K562 (cell line): ENCODE measurements at regions of chr1 and their contacts with region 1.

Region 1: DNA sequence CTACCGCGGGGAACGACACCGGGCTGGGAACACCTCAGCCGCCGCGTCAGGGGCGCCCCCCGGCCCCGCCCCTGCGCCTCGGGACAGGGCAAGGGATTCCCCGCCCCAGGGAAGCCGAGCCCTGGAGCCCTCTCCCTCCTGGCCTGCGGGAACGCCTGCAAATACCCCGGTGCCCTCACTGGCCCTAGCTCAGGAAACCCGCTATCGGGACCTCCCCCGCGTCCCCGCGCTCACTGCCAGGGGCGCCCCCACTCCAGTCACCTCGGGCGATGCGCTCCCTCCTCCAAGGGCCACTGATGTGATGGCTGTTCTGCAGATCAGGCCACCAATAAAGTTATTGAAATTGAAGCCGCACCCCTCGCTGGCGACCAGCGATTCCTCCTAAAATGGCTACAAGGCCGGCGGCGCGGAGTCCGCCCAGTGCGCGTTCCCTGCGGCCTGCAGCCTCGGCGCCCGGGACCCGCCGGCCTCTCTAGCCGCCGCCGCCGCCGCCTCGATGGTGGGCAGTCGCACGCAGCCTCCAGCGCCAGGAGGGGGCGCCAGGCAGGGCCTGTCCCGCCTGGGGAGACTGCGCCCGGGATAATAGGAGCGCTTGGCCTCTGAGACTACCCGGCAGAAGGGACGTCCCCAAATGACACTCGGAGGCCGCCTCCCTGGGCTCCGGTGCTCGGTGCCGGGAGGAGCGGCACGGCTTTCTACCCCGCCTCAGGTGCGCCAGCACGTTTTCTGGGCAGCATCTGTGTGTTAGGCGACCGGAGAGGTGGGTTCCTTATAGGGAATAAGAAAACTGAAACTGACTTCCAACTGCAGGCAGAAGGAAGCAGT is at the start of gene PRKAB2:
- DNase-seq: peak; percentile 89 to 95 (median 91)
- ATAC-seq: peak; percentile 94
- H3K4me3 ChIP-seq: peak within 1 kb of the TSS; percentile 70
- H3K27ac ChIP-seq: peak within 1 kb of the TSS; percentile 76
- H3K4me1 ChIP-seq: peaks cover 14% of the 10 kb centered on the region in 2 experiments
- H3K27me3 ChIP-seq: no peaks in the 10 kb centered on the region
- CTCF ChIP-seq: peak; percentile 81 to 91 (median 83)
- EP300 ChIP-seq: no peak; the same call in 1 of the 2 replicates
- POLR2A ChIP-seq: peak; percentile 78
- RAD21 ChIP-seq: peak; percentile 85 to 94
- polyA plus RNA-seq, gene PRKAB2: 2.3 to 4.0 TPM

Region 2: DNA sequence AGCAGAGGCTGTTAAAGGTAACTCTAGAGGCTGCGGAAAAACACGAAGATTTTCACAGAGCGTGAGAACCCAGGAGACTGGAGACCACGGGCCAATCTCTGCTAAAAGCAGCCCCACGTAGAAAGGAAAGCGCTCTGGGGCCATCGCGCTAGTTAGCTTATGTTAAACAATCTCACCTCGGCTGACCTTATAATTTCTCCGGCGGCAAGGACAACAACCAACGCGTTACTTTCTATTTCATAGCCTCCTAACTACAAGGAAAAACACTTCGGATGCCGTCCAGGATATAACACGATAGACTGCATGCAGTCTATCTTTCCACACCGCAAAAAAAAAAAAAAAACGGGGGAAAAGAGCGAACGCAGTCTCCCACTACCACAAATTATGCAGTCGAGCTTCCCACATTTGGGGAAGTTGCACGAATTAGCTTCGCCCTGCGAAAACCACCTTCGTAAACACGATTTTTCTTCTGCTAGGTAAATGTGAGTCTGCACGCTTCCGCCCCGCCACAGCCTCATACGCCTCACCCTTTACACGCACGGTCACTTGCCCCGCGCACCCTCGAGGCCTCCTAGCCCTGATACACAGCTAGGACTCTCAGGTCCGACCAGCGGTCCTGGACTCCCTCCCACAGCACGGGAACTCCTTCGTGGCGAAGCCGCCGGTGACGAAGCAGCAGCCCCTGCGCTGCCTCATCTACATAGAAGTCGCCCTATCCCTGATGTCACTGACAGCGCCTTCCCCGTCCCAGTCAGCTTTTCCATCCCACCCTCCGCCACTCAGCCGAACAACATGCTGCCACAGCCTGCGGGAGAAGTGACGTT is 87.9 kb before region 1 on chr1:
- CTCF ChIA-PET with region 1: no interaction called
- POLR2A ChIA-PET with region 1: interaction called, 10 read pairs
- in situ Hi-C with region 1: no loop called
- intact Hi-C with region 1: loop called (anchors 5 kb)
- DNase-seq: peak; percentile 82 to 94 (median 84)
- ATAC-seq: peak; percentile 92
- H3K4me3 ChIP-seq: peak overlapping the region; percentile 59
- H3K27ac ChIP-seq: peak overlapping the region; percentile 100
- H3K4me1 ChIP-seq: peaks cover 5 to 19% of the 10 kb centered on the region in 2 experiments; a peak in 4 of 5 replicates
- H3K27me3 ChIP-seq: peaks cover 11 to 16% of the 10 kb centered on the region in 2 experiments
- CTCF ChIP-seq: no peak
- EP300 ChIP-seq: peak; percentile 56
- POLR2A ChIP-seq: peak; percentile 100
- RAD21 ChIP-seq: no peak; a peak in 1 of 4 replicates

Region 3: DNA sequence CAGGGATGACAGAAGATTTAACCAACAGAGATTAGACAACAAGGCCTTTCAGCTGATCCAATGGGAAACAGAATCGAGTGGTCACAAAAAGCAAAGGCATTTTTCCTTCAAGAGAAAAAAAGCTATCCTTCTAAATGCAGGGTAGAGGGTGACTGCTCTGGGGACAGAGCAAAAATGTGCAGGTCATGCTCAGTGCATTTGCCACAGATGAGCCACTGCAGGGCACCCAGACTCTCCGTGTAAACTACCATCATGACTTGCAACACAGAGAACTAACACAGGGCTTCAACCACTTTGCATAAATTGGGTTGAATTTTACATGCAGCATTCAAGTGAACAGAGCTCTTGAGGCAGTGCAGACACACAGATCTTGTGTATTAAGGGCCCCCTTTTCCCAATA is 56.9 kb before region 1 on chr1:
- CTCF ChIA-PET with region 1: no interaction called
- POLR2A ChIA-PET with region 1: no interaction called
- in situ Hi-C with region 1: no loop called
- intact Hi-C with region 1: no loop called
- DNase-seq: no peak
- ATAC-seq: no peak
- H3K4me3 ChIP-seq: no peak overlapping the region
- H3K27ac ChIP-seq: no peak overlapping the region
- H3K4me1 ChIP-seq: no peaks in the 10 kb centered on the region
- H3K27me3 ChIP-seq: peaks cover 0 to 8% of the 10 kb centered on the region in 2 experiments; a peak in 2 of 5 replicates
- CTCF ChIP-seq: no peak
- EP300 ChIP-seq: no peak
- POLR2A ChIP-seq: no peak
- RAD21 ChIP-seq: no peak

Region 4: DNA sequence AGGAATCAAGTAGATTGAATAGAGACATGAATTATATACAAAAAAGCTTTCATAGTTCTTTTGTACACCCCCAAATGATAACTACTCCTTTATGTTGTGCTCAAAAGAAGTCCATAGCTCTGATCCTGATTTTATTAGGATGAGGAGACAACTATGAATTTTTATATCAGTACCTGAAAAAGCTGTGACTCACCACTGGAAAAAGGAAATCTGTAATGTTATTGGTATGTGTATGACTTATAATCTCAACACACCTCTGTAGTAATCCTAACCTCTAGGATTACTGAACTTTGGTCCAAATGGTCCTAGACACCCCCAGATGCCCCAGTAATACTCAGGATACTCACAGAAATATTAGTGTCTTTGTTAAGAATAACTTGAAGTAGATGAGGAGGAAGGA is 10.3 kb before region 1 on chr1:
- CTCF ChIA-PET with region 1: no interaction called
- POLR2A ChIA-PET with region 1: interaction called, 27 read pairs
- in situ Hi-C with region 1: no loop called
- intact Hi-C with region 1: loop called (anchors 1 kb)
- DNase-seq: no peak
- ATAC-seq: no peak
- H3K4me3 ChIP-seq: no peak overlapping the region
- H3K27ac ChIP-seq: no peak overlapping the region
- H3K4me1 ChIP-seq: peaks cover 0 to 9% of the 10 kb centered on the region in 2 experiments; a peak in 2 of 5 replicates
- H3K27me3 ChIP-seq: no peaks in the 10 kb centered on the region
- CTCF ChIP-seq: no peak
- EP300 ChIP-seq: no peak
- POLR2A ChIP-seq: no peak
- RAD21 ChIP-seq: no peak

Region 5: DNA sequence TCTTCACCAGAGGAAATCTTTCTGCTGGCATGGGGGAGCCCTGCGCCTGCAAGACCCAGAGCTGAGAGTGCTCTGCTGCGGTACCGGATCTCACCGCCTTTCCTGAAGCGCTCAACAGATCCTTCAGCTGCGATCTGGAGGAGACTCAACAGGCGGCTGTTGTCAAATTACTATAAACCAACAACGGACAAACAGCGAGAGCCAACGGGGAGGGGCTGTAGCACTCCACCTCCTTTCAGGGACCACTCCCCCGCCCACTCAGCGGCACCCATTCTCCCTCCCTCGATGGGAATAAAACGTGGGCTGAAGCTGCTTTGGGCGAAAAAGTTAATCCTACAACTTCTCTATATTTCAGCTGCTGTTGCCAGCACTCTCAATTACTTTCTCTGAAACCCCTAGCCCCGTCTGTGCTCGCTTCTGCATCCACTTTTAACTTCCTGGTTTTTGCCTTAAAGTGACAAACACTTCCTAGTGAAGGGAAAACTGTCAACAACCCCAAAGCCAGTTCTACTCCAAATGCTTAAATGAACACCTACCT is 52.9 kb after region 1 on chr1 and contains the start of gene FMO5:
- CTCF ChIA-PET with region 1: no interaction called
- POLR2A ChIA-PET with region 1: no interaction called
- in situ Hi-C with region 1: loop called (anchors 5 kb)
- intact Hi-C with region 1: no loop called
- DNase-seq: peak; percentile 56 to 61 (median 59)
- ATAC-seq: peak; percentile 97
- H3K4me3 ChIP-seq: peak within 1 kb of the TSS; percentile 40
- H3K27ac ChIP-seq: peak within 1 kb of the TSS; percentile 16; the same call in 1 of the 3 replicates
- H3K4me1 ChIP-seq: peaks cover 2 to 3% of the 10 kb centered on the region in 2 experiments; a peak in 1 of 5 replicates
- H3K27me3 ChIP-seq: peaks cover 6 to 12% of the 10 kb centered on the region in 2 experiments; a peak in 2 of 5 replicates
- CTCF ChIP-seq: peak; percentile 10 to 23 (median 21); a peak in 3 of 6 replicates
- EP300 ChIP-seq: no peak
- POLR2A ChIP-seq: no peak
- RAD21 ChIP-seq: no peak
- polyA plus RNA-seq, gene FMO5: 0.11 to 0.15 TPM

Region 6: GRCh38 chr1:147242439-147243227 is 70.3 kb after region 1 on chr1 and contains the start of gene CHD1L:
- CTCF ChIA-PET with region 1: interaction called, 21 read pairs
- POLR2A ChIA-PET with region 1: interaction called, 4 read pairs
- in situ Hi-C with region 1: no loop called
- intact Hi-C with region 1: loop called (anchors 2 kb)
- DNase-seq: peak; percentile 91 to 97 (median 92)
- ATAC-seq: peak; percentile 89
- H3K4me3 ChIP-seq: peak within 1 kb of the TSS; percentile 87
- H3K27ac ChIP-seq: peak within 1 kb of the TSS; percentile 93
- H3K4me1 ChIP-seq: peaks cover 8 to 28% of the 10 kb centered on the region in 2 experiments
- H3K27me3 ChIP-seq: no peaks in the 10 kb centered on the region
- CTCF ChIP-seq: peak; percentile 93 to 99 (median 99)
- EP300 ChIP-seq: peak; percentile 10; the same call in 1 of the 2 replicates
- POLR2A ChIP-seq: peak; percentile 92
- RAD21 ChIP-seq: peak; percentile 95 to 97
- polyA plus RNA-seq, gene CHD1L: 25.0 to 38.9 TPM

Region 7: GRCh38 chr1:147283011-147283410 is 110.6 kb after region 1 on chr1:
- CTCF ChIA-PET with region 1: no interaction called
- POLR2A ChIA-PET with region 1: no interaction called
- in situ Hi-C with region 1: no loop called
- intact Hi-C with region 1: no loop called
- DNase-seq: no peak
- ATAC-seq: no peak
- H3K4me3 ChIP-seq: no peak overlapping the region
- H3K27ac ChIP-seq: no peak overlapping the region
- H3K4me1 ChIP-seq: no peaks in the 10 kb centered on the region
- H3K27me3 ChIP-seq: no peaks in the 10 kb centered on the region
- CTCF ChIP-seq: no peak
- EP300 ChIP-seq: no peak
- POLR2A ChIP-seq: no peak
- RAD21 ChIP-seq: no peak